CD8-positive, alpha-beta T cell (primary cell): ENCODE measurements at regions of chr13 and their contacts with region 1.

Region 1: GRCh38 chr13:58960888-58961287 is 1202.8 kb downstream of the DIAPH3 start:
- DNase-seq: no peak
- ATAC-seq: no peak
- H3K4me3 ChIP-seq: no peak overlapping the region
- H3K4me3 Mint-ChIP-seq: no peak overlapping the region
- H3K27ac ChIP-seq: no peak overlapping the region
- H3K27ac Mint-ChIP-seq: no peak overlapping the region
- H3K4me1 ChIP-seq: no peaks in the 10 kb centered on the region
- H3K4me1 Mint-ChIP-seq: no peaks in the 10 kb centered on the region
- H3K27me3 ChIP-seq: no peaks in the 10 kb centered on the region
- H3K27me3 Mint-ChIP-seq: no peaks in the 10 kb centered on the region
- CTCF ChIP-seq: no peak

Region 2: DNA sequence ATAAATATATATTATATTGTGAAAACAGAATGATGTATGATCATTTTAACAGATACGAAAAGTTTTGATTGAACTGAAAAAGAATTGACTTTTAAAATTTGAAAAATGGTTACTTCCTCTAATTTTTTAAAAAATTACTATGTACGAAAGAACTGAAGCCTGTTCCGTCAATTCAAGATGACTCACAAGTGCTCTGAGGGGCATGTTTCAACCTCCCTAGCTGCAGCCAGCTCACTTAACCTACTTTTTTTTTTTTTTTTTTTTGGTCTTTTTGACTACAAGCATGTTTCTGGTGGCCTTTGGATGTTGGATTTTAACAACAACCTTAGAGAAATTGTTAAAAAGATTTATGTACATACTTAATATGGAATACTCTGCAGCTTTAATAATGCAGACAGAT is 63.5 kb after region 1 on chr13:
- CTCF ChIA-PET with region 1: no interaction called
- POLR2A ChIA-PET with region 1: no interaction called
- intact Hi-C with region 1: loop called in 1 of 2 experiments (anchors 10 kb)
- DNase-seq: no peak
- ATAC-seq: no peak
- H3K4me3 ChIP-seq: no peak overlapping the region
- H3K4me3 Mint-ChIP-seq: no peak overlapping the region
- H3K27ac ChIP-seq: no peak overlapping the region
- H3K27ac Mint-ChIP-seq: no peak overlapping the region
- H3K4me1 ChIP-seq: no peaks in the 10 kb centered on the region
- H3K4me1 Mint-ChIP-seq: no peaks in the 10 kb centered on the region
- H3K27me3 ChIP-seq: no peaks in the 10 kb centered on the region
- H3K27me3 Mint-ChIP-seq: no peaks in the 10 kb centered on the region
- CTCF ChIP-seq: no peak

Region 3: DNA sequence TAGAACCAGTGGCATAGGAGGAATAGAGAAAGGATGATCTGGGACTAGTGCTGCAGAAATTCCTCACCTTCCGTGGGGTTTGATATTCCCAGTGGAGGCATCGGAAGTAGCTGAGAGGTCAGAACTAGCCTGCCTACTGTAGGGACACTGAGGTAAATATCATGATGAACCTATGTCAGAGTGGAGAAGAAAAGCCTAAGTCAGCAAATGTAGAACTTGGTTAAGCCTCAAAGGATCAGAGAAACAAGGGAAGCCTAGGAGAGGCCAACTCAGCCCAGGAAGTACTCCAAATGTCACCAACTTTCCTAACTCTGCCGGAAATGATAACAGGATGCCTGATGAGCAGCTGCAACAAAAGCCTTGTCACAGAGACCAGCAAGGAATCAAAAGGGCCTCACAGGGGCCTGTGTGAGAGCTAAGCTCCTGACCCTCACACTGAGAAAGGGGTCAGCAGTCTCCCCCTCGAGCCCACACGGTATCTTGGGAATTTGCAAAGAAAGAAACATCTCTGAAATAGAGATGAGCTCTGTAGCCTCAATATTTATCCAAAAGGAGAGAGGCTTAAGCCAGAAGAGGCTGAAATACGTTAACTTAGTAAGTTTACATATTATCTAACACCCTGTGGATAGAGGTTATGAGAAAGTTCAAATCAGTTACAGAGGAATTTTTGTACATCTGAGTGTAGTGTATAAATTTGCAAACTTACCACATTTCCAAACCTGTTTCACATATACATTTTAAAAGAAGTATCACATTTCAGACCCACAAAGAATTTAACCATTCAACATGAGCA is 138.5 kb after region 1 on chr13:
- CTCF ChIA-PET with region 1: no interaction called
- POLR2A ChIA-PET with region 1: no interaction called
- intact Hi-C with region 1: no loop called
- DNase-seq: no peak
- ATAC-seq: no peak
- H3K4me3 ChIP-seq: no peak overlapping the region
- H3K4me3 Mint-ChIP-seq: no peak overlapping the region
- H3K27ac ChIP-seq: no peak overlapping the region
- H3K27ac Mint-ChIP-seq: no peak overlapping the region
- H3K4me1 ChIP-seq: no peaks in the 10 kb centered on the region
- H3K4me1 Mint-ChIP-seq: no peaks in the 10 kb centered on the region
- H3K27me3 ChIP-seq: no peaks in the 10 kb centered on the region
- H3K27me3 Mint-ChIP-seq: no peaks in the 10 kb centered on the region
- CTCF ChIP-seq: no peak

Region 4: GRCh38 chr13:59157181-59157580 is 196.3 kb after region 1 on chr13:
- CTCF ChIA-PET with region 1: no interaction called
- POLR2A ChIA-PET with region 1: no interaction called
- intact Hi-C with region 1: loop called in 1 of 2 experiments (anchors 5 kb)
- DNase-seq: no peak
- ATAC-seq: no peak
- H3K4me3 ChIP-seq: no peak overlapping the region
- H3K4me3 Mint-ChIP-seq: no peak overlapping the region
- H3K27ac ChIP-seq: no peak overlapping the region
- H3K27ac Mint-ChIP-seq: no peak overlapping the region
- H3K4me1 ChIP-seq: no peaks in the 10 kb centered on the region
- H3K4me1 Mint-ChIP-seq: no peaks in the 10 kb centered on the region
- H3K27me3 ChIP-seq: no peaks in the 10 kb centered on the region
- H3K27me3 Mint-ChIP-seq: no peaks in the 10 kb centered on the region
- CTCF ChIP-seq: no peak